ENCODE measurements at regions of chr12 and their contacts with region 1.

Region 1: DNA sequence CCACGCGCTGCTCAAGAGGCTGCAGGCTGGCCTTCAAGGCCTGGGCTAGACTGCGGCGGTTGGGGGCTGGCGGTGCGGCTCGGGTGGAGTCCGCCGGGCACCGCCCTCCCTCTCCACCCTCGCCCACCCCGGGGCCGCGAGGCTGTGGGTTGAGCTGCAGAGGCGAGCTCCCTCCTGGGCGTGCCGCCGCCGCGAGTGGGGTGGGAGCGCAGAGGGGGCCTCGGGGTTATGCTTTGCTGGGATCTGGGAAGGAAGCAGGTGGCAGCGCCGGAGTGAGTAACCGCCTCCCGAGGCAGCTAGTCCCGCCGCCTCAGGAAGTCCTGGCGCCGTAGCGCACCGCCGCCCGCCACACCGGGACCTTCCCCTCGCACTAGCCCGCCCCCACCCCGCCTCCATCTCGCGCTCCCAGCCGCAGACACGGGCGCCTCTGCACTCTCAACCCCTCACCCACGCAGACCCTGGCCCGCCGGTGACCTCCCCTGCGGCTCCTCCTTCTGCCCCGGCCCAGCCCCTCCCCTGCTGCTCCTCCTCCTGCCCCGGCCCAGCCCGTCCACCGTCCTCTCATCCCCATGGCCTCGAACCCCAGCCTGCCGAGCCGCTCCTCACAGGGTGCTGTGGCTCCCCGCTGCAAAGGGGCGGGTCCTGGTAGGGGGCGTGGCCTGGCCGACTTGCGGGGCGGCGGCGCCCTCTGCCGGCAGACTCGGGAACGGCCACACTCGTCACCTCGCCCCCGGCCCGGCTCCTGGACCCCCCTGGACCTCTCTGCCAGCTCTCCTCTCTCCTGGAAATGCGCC is 16.6 kb downstream of the TAMALIN start:
- DNase-seq: peak; percentile 87 to 95 (median 90)
- ATAC-seq: peak; percentile 26 to 62 (median 50)
- H3K4me3 ChIP-seq: peak overlapping the region; percentile 32 to 62 (median 55)
- H3K27ac ChIP-seq: peak overlapping the region; percentile 16 to 94 (median 68)
- H3K4me1 ChIP-seq: peaks cover 0 to 54% (median 35%) of the 10 kb centered on the region in 12 donors
- H3K27me3 ChIP-seq: no peaks in the 10 kb centered on the region
- CTCF ChIP-seq: peak; percentile 92 to 98 (median 94)
- POLR2A ChIP-seq: peak in 1 of 2 donors; percentile 20

Region 2: DNA sequence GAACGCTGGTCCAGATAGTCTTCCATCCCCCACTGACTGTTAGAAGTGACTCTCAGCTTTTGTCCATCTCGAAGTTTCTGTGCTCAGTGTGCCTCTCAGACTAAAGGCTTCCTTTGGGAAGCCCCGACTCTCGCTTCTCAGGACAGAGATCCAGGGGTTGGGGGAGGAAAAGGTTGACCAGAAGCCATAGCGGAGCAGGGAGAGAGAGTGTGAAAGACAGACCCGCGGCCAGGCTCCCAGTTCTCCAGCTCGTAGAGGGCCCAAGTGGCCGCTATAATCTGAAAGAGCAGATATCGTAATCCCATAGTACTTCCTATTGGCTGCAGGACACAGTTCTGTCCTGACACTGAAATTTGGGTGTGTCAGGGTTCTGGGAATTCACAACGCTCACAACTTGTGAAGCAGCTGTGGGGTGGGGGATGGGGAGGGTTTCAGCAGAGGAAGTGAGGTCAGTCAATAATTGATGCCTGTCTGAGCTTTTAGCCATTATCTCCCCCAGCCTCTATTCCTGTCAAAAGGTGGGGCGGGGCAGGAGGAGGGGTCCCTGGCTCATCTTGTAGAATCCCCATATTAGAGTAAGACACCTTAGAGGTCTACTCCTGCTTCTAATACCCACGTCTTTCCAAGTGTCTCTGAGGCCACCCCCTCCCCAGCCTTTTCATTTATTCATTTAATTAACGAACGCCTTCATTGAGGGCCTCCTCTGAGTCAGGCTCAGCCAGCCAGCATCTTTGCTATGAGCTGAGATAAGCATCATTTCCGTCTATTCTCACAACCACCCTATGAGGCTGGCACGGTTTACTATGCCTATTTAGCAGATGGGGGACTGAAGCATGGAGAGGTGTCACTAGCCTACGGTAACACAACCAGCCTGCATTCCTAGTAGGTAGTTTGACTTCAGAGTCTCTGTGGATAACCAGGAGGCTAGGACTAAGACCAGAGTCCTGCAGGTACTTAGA is 117.6 kb before region 1 on chr12:
- intact Hi-C with region 1: loop called in 1 of 10 experiments (anchors 5 kb)
- DNase-seq: peak; percentile 81 to 94 (median 85)
- ATAC-seq: peak; percentile 69 to 85 (median 82)
- H3K4me3 ChIP-seq: peak overlapping the region in 10 of 12 donors; percentile 61 to 90 (median 71)
- H3K27ac ChIP-seq: peak overlapping the region; percentile 87 to 98 (median 94)
- H3K4me1 ChIP-seq: peaks cover 3 to 63% (median 52%) of the 10 kb centered on the region in 12 donors
- H3K27me3 ChIP-seq: peaks cover 0 to 22% (median 5%) of the 10 kb centered on the region in 9 donors
- CTCF ChIP-seq: no peak
- POLR2A ChIP-seq: peak in 1 of 2 donors; percentile 51

Region 3: GRCh38 chr12:52004042-52004648 is 19.2 kb before region 1 on chr12:
- intact Hi-C with region 1: loop called in 6 of 10 experiments (anchors 1 to 2 kb)
- DNase-seq: peak in 4 of 5 donors; percentile 59 to 64 (median 60)
- ATAC-seq: peak; percentile 16 to 40 (median 30)
- H3K4me3 ChIP-seq: no peak overlapping the region
- H3K27ac ChIP-seq: no peak overlapping the region
- H3K4me1 ChIP-seq: peaks cover 0 to 47% (median 17%) of the 10 kb centered on the region in 12 donors
- H3K27me3 ChIP-seq: peaks cover 0 to 20% (median 4%) of the 10 kb centered on the region in 9 donors
- CTCF ChIP-seq: peak; percentile 48 to 77 (median 70)
- POLR2A ChIP-seq: no peak

Region 4: DNA sequence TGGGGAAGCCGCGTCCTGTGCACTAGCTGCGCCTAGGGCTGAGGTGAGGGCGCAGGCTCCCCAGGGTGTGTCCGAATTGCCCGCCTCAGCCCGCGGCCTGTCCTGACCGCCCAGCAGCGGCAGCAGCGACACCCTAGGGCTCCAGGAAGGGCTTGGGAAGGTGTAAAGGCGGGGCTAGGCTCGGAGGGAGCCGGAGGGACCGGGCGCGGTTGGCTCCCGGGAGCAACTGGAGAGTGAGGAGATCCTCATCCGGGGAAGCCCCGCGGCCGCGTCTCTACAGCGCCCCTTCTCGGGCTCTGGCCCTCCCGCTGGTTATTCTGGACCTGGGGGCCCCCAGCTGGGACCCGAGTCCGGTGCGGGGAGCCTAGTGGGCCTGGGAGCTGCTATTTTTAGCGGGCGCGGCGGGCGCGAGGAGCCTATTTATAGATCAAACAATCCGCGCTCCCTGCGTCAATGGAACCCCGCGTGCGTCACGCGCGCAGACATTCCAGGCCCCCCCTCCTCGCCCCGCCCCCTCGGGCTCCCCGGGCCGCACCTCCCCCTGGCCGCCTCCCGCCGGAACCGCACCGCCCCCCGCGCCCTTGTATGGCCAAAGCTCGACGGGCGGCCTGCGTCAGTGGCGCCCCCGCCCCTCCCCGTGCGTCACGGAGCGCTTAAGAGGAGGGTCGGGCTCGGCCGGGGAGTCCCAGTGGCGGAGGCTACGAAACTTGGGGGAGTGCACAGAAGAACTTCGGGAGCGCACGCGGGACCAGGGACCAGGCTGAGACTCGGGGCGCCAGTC is 27.6 kb after region 1 on chr12 and contains the start of gene NR4A1:
- intact Hi-C with region 1: loop called in 4 of 10 experiments (anchors 2 kb)
- DNase-seq: peak; percentile 99 to 100 (median 99)
- ATAC-seq: peak; percentile 82 to 89 (median 84)
- H3K4me3 ChIP-seq: peak within 1 kb of the TSS; percentile 48 to 83 (median 74)
- H3K27ac ChIP-seq: peak within 1 kb of the TSS; percentile 89 to 99 (median 97)
- H3K4me1 ChIP-seq: peaks cover 5 to 92% (median 44%) of the 10 kb centered on the region in 12 donors
- H3K27me3 ChIP-seq: no peaks in the 10 kb centered on the region
- CTCF ChIP-seq: peak in 9 of 12 donors; percentile 11 to 64 (median 35)
- POLR2A ChIP-seq: peak; percentile 97
- total RNA-seq, gene NR4A1: 22.0 to 140 (median 42.0) TPM

Region 5: GRCh38 chr12:52082988-52083637 is 59.7 kb after region 1 on chr12:
- intact Hi-C with region 1: loop called (anchors 1 to 2 kb)
- DNase-seq: peak; percentile 44 to 80 (median 64)
- ATAC-seq: peak in 3 of 4 donors; percentile 44 to 58 (median 47)
- H3K4me3 ChIP-seq: no peak overlapping the region
- H3K27ac ChIP-seq: peak overlapping the region; percentile 37 to 89 (median 71)
- H3K4me1 ChIP-seq: peaks cover 6 to 37% (median 27%) of the 10 kb centered on the region in 12 donors
- H3K27me3 ChIP-seq: peaks cover 0 to 6% (median 0%) of the 10 kb centered on the region in 9 donors
- CTCF ChIP-seq: peak; percentile 93 to 99 (median 98)
- POLR2A ChIP-seq: no peak